Natural killer cell (primary cell): ENCODE measurements at regions of chr11 and their contacts with region 1.

Region 1: GRCh38 chr11:12224537-12224893 is 114.1 kb downstream of the MICAL2 start:
- DNase-seq: peak; percentile 89 to 95
- ATAC-seq: peak; percentile 89 to 96 (median 94)
- H3K4me3 ChIP-seq: peak overlapping the region; percentile 31
- H3K4me3 Mint-ChIP-seq: peak overlapping the region; percentile 87
- H3K27ac ChIP-seq: peak overlapping the region; percentile 86
- H3K27ac Mint-ChIP-seq: peak overlapping the region; percentile 95
- H3K4me1 ChIP-seq: peaks cover 62% of the 10 kb centered on the region
- H3K4me1 Mint-ChIP-seq: peaks cover 49 to 64% of the 10 kb centered on the region in 2 donors
- H3K27me3 ChIP-seq: no peaks in the 10 kb centered on the region
- H3K27me3 Mint-ChIP-seq: peaks cover 4 to 7% of the 10 kb centered on the region in 2 donors
- CTCF ChIP-seq: no peak

Region 2: DNA sequence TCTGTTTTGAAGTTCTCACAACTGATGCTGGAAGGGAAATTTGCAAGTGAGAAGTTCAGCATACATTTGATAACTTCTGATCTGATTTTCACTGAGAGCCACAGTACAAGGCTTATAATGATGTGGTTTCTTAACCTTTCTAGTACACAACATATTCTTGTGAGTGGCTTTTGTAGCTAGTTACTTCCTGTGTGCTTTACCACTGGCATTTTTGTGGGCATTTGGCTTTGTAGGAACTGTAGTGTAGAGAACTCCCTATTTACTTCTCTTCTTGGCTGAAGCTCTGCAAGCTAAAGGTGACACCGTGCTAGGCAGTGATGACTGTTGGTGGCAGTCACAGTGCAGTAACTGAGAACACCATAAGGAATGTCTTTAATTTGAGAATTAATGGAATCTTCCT is 367.9 kb before region 1 on chr11:
- intact Hi-C with region 1: no loop called
- DNase-seq: peak in 1 of 2 donors; percentile 69
- ATAC-seq: peak; percentile 70 to 82 (median 79)
- H3K4me3 ChIP-seq: no peak overlapping the region
- H3K4me3 Mint-ChIP-seq: peak overlapping the region; percentile 52
- H3K27ac ChIP-seq: peak overlapping the region; percentile 41
- H3K27ac Mint-ChIP-seq: peak overlapping the region; percentile 35 to 39
- H3K4me1 ChIP-seq: peaks cover 24% of the 10 kb centered on the region
- H3K4me1 Mint-ChIP-seq: peaks cover 57 to 75% of the 10 kb centered on the region in 2 donors
- H3K27me3 ChIP-seq: no peaks in the 10 kb centered on the region
- H3K27me3 Mint-ChIP-seq: no peaks in the 10 kb centered on the region
- CTCF ChIP-seq: no peak

Region 3: GRCh38 chr11:12110201-12110713 is 114.3 kb before region 1 on chr11 and contains the start of gene MICAL2:
- intact Hi-C with region 1: loop called (anchors 5 kb)
- DNase-seq: peak; percentile 86 to 92
- ATAC-seq: peak; percentile 95 to 99 (median 97)
- H3K4me3 ChIP-seq: peak within 1 kb of the TSS; percentile 46
- H3K4me3 Mint-ChIP-seq: peak within 1 kb of the TSS; percentile 83
- H3K27ac ChIP-seq: peak within 1 kb of the TSS; percentile 9
- H3K27ac Mint-ChIP-seq: peak within 1 kb of the TSS in 1 of 2 donors; percentile 80
- H3K4me1 ChIP-seq: peaks cover 44% of the 10 kb centered on the region
- H3K4me1 Mint-ChIP-seq: peaks cover 26 to 32% of the 10 kb centered on the region in 2 donors
- H3K27me3 ChIP-seq: no peaks in the 10 kb centered on the region
- H3K27me3 Mint-ChIP-seq: peaks cover under 1 to 5% of the 10 kb centered on the region in 2 donors
- CTCF ChIP-seq: no peak
- total RNA-seq, gene MICAL2: 54.6 to 68.6 (median 57.4) TPM